ENCODE measurements at regions of chr11 and their contacts with region 1.

Region 1: DNA sequence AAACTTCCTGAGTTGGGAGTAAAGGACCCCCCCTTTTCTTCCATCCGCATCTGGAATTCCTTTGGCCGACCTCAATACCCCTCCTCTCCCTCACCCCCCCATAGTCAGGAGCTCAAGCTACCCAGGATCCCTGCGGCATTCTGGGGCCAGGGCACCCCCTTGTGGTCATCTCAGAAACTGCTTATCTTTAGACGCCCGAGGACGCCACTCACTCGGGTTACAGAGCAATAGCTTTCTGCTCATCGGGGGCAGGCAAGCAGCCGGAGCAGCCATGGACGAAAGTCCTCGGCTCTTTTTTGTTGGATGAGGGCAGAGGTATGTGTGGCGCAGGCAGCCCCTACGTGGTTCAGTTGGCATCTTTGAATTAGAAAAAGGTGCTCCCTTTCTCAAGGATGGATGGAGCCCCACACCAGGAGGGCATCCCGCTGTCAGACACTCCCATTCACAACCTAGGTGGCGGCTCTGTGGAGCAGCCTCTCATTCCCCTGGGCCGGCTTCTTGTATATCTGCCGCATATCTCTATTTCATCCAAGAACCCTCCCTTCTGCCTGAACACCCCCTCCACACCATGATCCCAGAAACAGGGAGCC is 2.3 kb downstream of the C1QTNF5 start:
- DNase-seq: no peak
- H3K4me3 ChIP-seq: peak overlapping the region in 2 of 3 donors; percentile 81 to 87
- H3K27ac ChIP-seq: peak overlapping the region in 1 of 2 donors; percentile 43
- H3K4me1 ChIP-seq: peaks cover 8 to 16% of the 10 kb centered on the region in 2 donors
- H3K27me3 ChIP-seq: peaks cover 0 to 2% of the 10 kb centered on the region in 2 donors
- CTCF ChIP-seq: peak; percentile 68 to 81 (median 74)
- POLR2A ChIP-seq: no peak

Region 2: DNA sequence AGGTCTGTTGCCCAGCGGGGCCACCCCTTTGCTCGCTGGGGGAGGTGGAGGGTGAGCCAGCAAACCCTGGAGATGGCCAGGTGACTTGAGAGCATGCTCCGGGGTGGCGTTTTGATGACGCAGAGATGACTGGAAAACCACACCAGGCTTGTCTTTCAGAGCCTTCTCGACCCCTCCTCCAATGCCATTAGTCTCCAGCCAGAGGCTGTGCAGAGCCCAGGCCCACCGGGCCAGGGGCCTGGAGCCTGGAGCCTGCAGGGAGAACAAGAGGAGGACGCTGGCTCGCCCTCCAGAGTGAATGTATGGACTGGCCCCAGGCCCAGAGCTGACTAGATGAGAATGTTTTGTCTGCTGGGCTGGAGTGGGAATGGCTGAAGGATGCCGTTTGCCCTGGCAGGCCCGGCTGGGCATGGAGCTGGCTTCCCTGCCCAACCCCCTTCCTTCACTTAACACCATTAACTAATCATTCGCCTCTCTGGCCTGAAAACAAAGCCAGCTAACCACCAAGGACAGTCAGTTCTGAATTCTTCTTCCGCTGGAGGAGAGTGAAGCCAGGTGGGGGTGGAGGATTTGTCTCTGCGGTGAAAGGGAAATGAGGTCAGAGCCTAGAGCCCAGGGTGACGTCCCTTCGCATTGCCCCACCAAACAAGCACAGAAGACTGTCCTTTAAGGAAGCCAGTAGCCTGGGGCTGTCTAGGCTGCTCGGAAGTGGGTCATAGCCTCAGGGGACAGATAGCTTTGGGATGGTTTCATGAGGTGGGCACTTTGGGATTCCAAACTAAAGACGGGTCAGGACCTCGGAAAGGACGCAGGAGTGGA is 19.9 kb before region 1 on chr11:
- intact Hi-C with region 1: loop called (anchors 1 kb)
- DNase-seq: peak in 1 of 2 donors; percentile 79
- H3K4me3 ChIP-seq: peak overlapping the region in 2 of 3 donors; percentile 7 to 81
- H3K27ac ChIP-seq: peak overlapping the region; percentile 90 to 96
- H3K4me1 ChIP-seq: peaks cover 5 to 15% of the 10 kb centered on the region in 2 donors
- H3K27me3 ChIP-seq: peaks cover 0 to 3% of the 10 kb centered on the region in 2 donors
- CTCF ChIP-seq: no peak
- POLR2A ChIP-seq: no peak

Region 3: DNA sequence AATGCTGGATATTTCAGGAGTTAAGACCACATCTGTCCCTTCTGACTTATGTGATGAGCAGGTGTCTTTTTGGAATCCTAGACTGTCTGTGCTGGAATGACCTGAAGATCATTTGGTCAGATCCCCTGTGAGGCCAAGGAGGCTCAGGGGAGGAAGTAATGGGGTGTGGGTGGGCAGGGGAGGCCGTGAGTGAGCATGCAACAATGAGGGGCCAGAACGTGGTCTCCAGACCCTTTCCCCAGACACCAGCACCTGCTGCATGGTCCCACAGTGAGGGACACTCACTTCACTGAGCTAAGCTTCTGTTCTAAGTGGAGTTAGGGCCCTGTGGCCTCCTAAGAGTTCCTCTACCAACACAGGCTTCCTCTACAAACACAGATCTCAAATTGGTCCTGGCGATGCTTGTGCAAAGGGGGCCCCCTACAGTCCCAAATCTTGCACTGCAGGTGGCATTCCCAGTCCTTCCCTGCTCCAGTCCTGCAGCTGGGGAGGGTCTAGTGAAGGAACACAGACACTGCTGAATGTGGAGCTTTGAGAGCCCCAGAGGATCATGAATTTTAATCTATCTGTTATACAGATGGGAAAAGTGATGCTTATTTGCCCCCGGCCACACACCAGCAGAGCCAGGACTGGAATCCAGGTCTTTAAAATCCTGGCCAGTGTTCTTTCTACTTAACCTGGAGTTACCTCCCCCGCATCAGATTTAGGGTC is 35.7 kb after region 1 on chr11:
- intact Hi-C with region 1: no loop called
- DNase-seq: peak in 1 of 2 donors; percentile 73
- H3K4me3 ChIP-seq: no peak overlapping the region
- H3K27ac ChIP-seq: peak overlapping the region; percentile 93 to 95
- H3K4me1 ChIP-seq: peaks cover 24 to 37% of the 10 kb centered on the region in 2 donors
- H3K27me3 ChIP-seq: no peaks in the 10 kb centered on the region
- CTCF ChIP-seq: peak; percentile 68 to 80 (median 79)
- POLR2A ChIP-seq: no peak